AG04450 (cell line): ENCODE measurements at regions of chr5 and their contacts with region 1.

Region 1: GRCh38 chr5:17189381-17190036 is 27.9 kb upstream of the BASP1 start:
- DNase-seq: peak; percentile 58
- H3K4me3 ChIP-seq: no peak overlapping the region
- H3K27ac ChIP-seq: no peak overlapping the region
- H3K27me3 ChIP-seq: no peaks in the 10 kb centered on the region
- CTCF ChIP-seq: peak; percentile 89

Region 2: GRCh38 chr5:16759147-16759773 is 430.2 kb before region 1 on chr5:
- CTCF ChIA-PET with region 1: interaction called, 16 read pairs
- POLR2A ChIA-PET with region 1: no interaction called
- DNase-seq: no peak
- H3K4me3 ChIP-seq: no peak overlapping the region
- H3K27ac ChIP-seq: no peak overlapping the region
- H3K27me3 ChIP-seq: no peaks in the 10 kb centered on the region
- CTCF ChIP-seq: no peak

Region 3: GRCh38 chr5:16916262-16916865 is 273.1 kb before region 1 on chr5:
- CTCF ChIA-PET with region 1: interaction called, 31 read pairs
- POLR2A ChIA-PET with region 1: no interaction called
- DNase-seq: peak; percentile 55
- H3K4me3 ChIP-seq: no peak overlapping the region
- H3K27ac ChIP-seq: peak overlapping the region; percentile 39
- H3K27me3 ChIP-seq: no peaks in the 10 kb centered on the region
- CTCF ChIP-seq: no peak

Region 4: GRCh38 chr5:17132444-17133083 is 56.9 kb before region 1 on chr5:
- CTCF ChIA-PET with region 1: interaction called, 23 read pairs
- POLR2A ChIA-PET with region 1: no interaction called
- DNase-seq: no peak
- H3K4me3 ChIP-seq: no peak overlapping the region
- H3K27ac ChIP-seq: no peak overlapping the region
- H3K27me3 ChIP-seq: no peaks in the 10 kb centered on the region
- CTCF ChIP-seq: peak; percentile 68

Region 5: DNA sequence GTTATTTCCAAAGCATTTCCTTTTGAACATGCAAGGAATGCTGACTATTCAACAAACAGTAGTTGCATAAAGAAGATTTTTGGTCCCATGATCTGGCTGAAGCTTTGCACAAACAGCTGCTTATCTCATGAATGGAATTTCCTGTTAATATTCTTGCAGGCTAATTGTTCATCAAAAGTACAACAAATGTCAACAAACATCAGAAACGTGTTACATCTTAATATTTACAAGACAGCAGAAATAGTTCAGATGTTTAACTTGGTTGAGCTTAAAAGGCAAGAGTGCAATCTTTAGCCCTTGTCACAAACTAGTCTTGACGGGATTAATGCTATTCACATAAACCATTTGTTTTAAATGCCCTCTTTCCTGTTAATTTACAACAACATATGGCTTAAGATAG is 20.0 kb before region 1 on chr5:
- CTCF ChIA-PET with region 1: interaction called, 14 read pairs
- POLR2A ChIA-PET with region 1: interaction called, 7 read pairs
- DNase-seq: peak; percentile 68
- H3K4me3 ChIP-seq: no peak overlapping the region
- H3K27ac ChIP-seq: no peak overlapping the region
- H3K27me3 ChIP-seq: no peaks in the 10 kb centered on the region
- CTCF ChIP-seq: no peak